ENCODE measurements at regions of chrX and their contacts with region 1.

Region 1: GRCh38 chrX:77572322-77572721 is 125.1 kb downstream of the FGF16 start:
- DNase-seq: no peak
- ATAC-seq: no peak
- H3K4me3 ChIP-seq: no peak overlapping the region
- H3K27ac ChIP-seq: no peak overlapping the region
- H3K4me1 ChIP-seq: no peaks in the 10 kb centered on the region
- H3K27me3 ChIP-seq: no peaks in the 10 kb centered on the region
- CTCF ChIP-seq: no peak

Region 2: GRCh38 chrX:77200663-77201062 is 371.7 kb before region 1 on chrX:
- intact Hi-C with region 1: loop called in 1 of 10 experiments (anchors 5 kb)
- DNase-seq: no peak
- ATAC-seq: no peak
- H3K4me3 ChIP-seq: no peak overlapping the region
- H3K27ac ChIP-seq: no peak overlapping the region
- H3K4me1 ChIP-seq: no peaks in the 10 kb centered on the region
- H3K27me3 ChIP-seq: no peaks in the 10 kb centered on the region
- CTCF ChIP-seq: no peak

Region 3: DNA sequence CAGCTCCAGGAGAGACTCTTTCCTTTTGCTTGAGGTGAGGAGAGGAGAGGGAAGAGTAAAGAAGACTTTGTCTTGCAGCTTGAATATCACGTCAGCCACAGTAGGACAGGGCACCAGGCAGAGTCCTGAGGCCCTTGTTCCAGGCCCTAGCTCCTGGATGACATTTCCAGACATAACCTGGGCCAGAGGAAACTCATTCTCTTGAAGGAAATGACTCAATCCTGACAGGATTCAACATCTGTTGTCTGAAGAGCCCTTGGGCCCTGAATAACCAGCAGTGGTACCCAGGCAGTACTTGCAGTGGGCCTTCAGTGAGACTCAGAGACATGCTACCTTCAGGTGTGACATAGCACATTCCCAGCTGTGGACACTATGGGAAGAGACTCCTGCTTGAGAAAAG is 62.3 kb before region 1 on chrX:
- intact Hi-C with region 1: no loop called
- DNase-seq: no peak
- ATAC-seq: peak in 4 of 8 donors; percentile 23 to 68 (median 54)
- H3K4me3 ChIP-seq: no peak overlapping the region
- H3K27ac ChIP-seq: peak overlapping the region in 2 of 10 donors; percentile 22 to 41
- H3K4me1 ChIP-seq: peaks cover 0 to 10% (median 0%) of the 10 kb centered on the region in 9 donors
- H3K27me3 ChIP-seq: peaks cover 0 to 7% (median 0%) of the 10 kb centered on the region in 7 donors
- CTCF ChIP-seq: no peak

Region 4: DNA sequence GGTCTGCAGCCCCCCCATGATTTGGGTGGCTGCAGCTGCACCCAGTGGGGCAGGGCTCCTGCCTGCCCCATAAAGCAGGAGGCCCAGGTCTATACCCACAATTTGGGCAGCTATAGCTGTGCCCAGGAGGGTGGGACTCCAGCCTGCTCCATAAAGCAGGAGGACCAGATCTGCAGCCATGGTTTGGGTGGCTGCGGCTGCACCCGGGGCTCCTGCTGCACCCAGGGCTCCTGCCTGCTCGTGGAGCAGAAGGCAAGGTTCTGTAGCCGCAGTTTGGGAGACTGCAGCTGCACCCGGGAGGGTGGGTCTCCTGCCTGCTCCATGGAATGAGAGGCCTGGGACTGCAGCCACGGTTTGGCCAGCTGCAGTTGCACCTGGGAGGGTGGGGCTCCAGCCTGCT is 132.6 kb after region 1 on chrX:
- intact Hi-C with region 1: no loop called
- DNase-seq: no peak
- ATAC-seq: no peak
- H3K4me3 ChIP-seq: no peak overlapping the region
- H3K27ac ChIP-seq: no peak overlapping the region
- H3K4me1 ChIP-seq: peaks cover 0 to 5% (median 0%) of the 10 kb centered on the region in 9 donors
- H3K27me3 ChIP-seq: no peaks in the 10 kb centered on the region
- CTCF ChIP-seq: no peak